ENCODE measurements at regions of chr7 and their contacts with region 1.

Region 1: DNA sequence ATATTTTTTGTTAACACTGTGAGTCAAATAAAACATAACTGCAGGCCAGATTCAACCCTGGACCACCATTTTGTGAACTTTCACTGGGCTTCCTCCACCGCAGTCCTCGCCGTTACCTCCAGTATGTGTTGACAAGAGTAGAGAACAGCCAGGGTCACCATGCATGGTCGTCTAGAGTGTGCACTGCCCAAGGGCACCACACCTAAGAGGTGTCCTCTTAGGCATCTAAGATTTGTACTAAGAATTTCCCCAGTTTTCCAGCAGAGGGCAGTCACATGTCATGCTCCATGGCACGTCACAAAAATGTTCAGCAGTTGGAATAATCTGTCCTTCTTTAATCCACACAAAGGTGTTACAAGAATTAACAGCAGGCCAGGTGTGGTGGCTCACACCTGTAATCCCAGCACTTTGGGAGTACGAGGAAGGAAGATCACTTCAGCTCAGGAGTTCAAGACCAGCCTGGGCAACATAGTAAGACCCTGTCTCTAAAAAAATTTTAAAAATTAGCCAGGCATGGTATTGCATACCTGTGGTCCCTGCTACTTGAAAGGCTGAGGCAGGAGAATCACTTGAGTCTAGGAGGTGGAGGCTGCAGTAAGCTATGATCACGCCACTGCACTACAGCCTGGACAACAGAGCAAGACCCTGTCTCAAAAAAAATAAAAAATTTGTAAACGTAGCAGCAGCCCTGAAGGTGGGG is 71.2 kb upstream of the FOXK1 start:
- DNase-seq: peak in 3 of 5 donors; percentile 30 to 48 (median 39)
- ATAC-seq: peak in 3 of 4 donors; percentile 54 to 78 (median 74)
- H3K4me3 ChIP-seq: no peak overlapping the region
- H3K27ac ChIP-seq: no peak overlapping the region
- H3K4me1 ChIP-seq: peaks cover 0 to 20% (median 9%) of the 10 kb centered on the region in 12 donors
- H3K27me3 ChIP-seq: no peaks in the 10 kb centered on the region
- CTCF ChIP-seq: peak; percentile 72 to 92 (median 81)
- POLR2A ChIP-seq: no peak

Region 2: GRCh38 chr7:4626318-4626845 is 15.5 kb after region 1 on chr7:
- intact Hi-C with region 1: loop called in 7 of 10 experiments (anchors 1 to 2 kb)
- DNase-seq: peak in 1 of 5 donors; percentile 10
- ATAC-seq: no peak
- H3K4me3 ChIP-seq: no peak overlapping the region
- H3K27ac ChIP-seq: peak overlapping the region in 3 of 12 donors; percentile 12 to 52 (median 46)
- H3K4me1 ChIP-seq: peaks cover 0 to 17% (median 4%) of the 10 kb centered on the region in 12 donors
- H3K27me3 ChIP-seq: no peaks in the 10 kb centered on the region
- CTCF ChIP-seq: no peak
- POLR2A ChIP-seq: no peak

Region 3: GRCh38 chr7:4631664-4632171 is 20.8 kb after region 1 on chr7:
- intact Hi-C with region 1: loop called in 8 of 10 experiments (anchors 1 to 2 kb)
- DNase-seq: peak; percentile 66 to 84 (median 79)
- ATAC-seq: peak; percentile 78 to 98 (median 95)
- H3K4me3 ChIP-seq: peak overlapping the region in 9 of 12 donors; percentile 18 to 41 (median 32)
- H3K27ac ChIP-seq: peak overlapping the region in 3 of 12 donors; percentile 43 to 64 (median 44)
- H3K4me1 ChIP-seq: peaks cover 0 to 13% (median 6%) of the 10 kb centered on the region in 12 donors
- H3K27me3 ChIP-seq: no peaks in the 10 kb centered on the region
- CTCF ChIP-seq: peak; percentile 42 to 78 (median 65)
- POLR2A ChIP-seq: no peak

Region 4: DNA sequence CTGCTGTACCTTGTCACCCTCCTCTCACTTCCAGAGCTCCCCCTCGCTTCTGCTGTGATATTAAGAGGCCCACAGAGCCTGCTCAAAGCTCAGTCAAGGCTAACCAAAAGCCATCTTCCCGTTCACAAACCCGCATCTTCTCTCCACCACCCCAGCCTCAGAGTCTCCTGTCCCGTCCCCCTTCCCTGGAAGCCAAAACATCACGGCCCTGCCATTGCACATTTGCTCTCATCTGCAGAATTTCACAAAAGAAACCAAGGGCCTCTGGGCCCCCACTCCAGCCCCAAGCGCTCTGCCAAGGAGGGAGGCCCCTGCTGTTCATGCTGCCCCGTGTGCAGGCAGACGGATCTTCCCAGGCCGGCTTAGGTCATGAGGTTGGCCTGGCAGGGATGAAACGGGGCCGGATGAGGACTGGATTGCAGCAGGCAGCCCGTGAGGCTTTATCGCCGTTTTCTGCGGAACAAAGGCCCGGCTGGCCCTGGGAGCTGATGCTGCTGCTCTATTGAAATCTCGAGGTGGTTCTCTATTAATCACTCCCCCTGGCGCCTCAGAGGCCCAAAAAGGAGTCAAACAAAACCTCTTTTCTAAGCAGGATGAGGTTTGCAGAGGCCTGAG is 39.6 kb after region 1 on chr7:
- intact Hi-C with region 1: no loop called
- DNase-seq: peak; percentile 37 to 67 (median 51)
- ATAC-seq: peak; percentile 57 to 86 (median 78)
- H3K4me3 ChIP-seq: no peak overlapping the region
- H3K27ac ChIP-seq: peak overlapping the region in 9 of 12 donors; percentile 20 to 71 (median 49)
- H3K4me1 ChIP-seq: peaks cover 0 to 13% (median 7%) of the 10 kb centered on the region in 12 donors
- H3K27me3 ChIP-seq: no peaks in the 10 kb centered on the region
- CTCF ChIP-seq: no peak
- POLR2A ChIP-seq: no peak

Measured in heart left ventricle (tissue), 16 donors.